ENCODE measurements at regions of chr4 and their contacts with region 1.

Region 1: GRCh38 chr4:174282836-174283506 is 496 bp downstream of the FBXO8 start:
- DNase-seq: peak; percentile 92
- H3K4me3 ChIP-seq: peak overlapping the region; percentile 89
- H3K27ac ChIP-seq: peak overlapping the region; percentile 88
- H3K4me1 ChIP-seq: peaks cover 19% of the 10 kb centered on the region
- CTCF ChIP-seq: no peak

Region 2: GRCh38 chr4:173370477-173371291 is 912.3 kb before region 1 on chr4 and contains the start of gene SAP30:
- CTCF ChIA-PET with region 1: no interaction called
- POLR2A ChIA-PET with region 1: no interaction called
- intact Hi-C with region 1: loop called (anchors 10 kb)
- DNase-seq: peak; percentile 98
- H3K4me3 ChIP-seq: peak within 1 kb of the TSS; percentile 83
- H3K27ac ChIP-seq: peak within 1 kb of the TSS; percentile 91
- H3K4me1 ChIP-seq: peaks cover 39% of the 10 kb centered on the region
- CTCF ChIP-seq: no peak
- total RNA-seq, gene SAP30: 63.5 and 86.2 TPM in 2 replicates

Region 3: DNA sequence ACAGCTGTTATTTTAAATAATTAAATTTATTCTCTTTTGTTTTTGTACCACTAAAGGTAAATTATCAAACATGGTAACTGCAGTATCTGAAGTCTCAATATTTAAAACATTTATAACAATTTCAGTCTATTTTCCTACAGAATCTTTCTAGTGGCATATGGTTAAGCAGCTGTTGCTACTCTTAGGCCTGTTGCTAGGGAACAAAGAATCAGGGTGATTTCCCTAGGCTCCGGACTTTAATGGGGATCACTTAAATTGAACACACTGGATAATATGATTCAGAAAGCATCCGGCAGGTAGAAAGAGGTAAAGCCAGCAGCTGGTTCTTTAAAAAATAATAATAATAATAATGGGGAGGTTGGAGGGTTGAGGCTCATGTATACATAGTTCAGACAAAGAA is 17.1 kb before region 1 on chr4:
- CTCF ChIA-PET with region 1: no interaction called
- POLR2A ChIA-PET with region 1: interaction called, 16 read pairs
- intact Hi-C with region 1: no loop called
- DNase-seq: no peak
- H3K4me3 ChIP-seq: no peak overlapping the region
- H3K27ac ChIP-seq: no peak overlapping the region
- H3K4me1 ChIP-seq: no peaks in the 10 kb centered on the region
- CTCF ChIP-seq: no peak

Measured in OCI-LY7 (cell line).